ENCODE measurements at regions of chr2 and their contacts with region 1.

Region 1: DNA sequence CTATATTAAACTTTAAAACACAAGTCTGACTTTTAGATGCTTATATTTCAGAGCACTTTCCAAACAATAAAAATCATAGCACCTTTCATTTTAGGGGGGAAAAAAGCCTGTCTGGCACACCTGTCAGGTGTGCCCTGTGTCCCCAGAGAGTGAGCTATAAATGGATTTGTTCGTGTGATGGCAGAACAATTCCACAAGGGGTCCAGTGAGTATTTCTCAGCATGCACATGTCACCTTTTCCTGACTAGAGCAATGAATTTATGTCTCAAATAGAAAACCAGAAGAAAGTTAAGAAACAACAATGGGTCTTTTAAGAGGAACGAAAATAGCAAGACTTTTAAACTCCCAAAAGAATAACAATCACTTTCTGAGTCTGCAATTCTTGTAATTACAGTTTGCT is 55.9 kb downstream of the ACVR1C start:
- DNase-seq: peak; percentile 6 to 36
- ATAC-seq: peak in 1 of 2 experiments; percentile 76; a peak in 3 of 6 replicates
- H3K4me3 ChIP-seq: no peak overlapping the region
- H3K27ac ChIP-seq: no peak overlapping the region
- H3K4me1 ChIP-seq: no peaks in the 10 kb centered on the region
- CTCF ChIP-seq: 0 out of 3 replicates have a peak, but pooled peaks have one; percentile 8
- EP300 ChIP-seq: no peak
- POLR2A ChIP-seq: no peak
- RAD21 ChIP-seq: no peak

Region 2: GRCh38 chr2:157592948-157593347 is 20.2 kb after region 1 on chr2:
- CTCF ChIA-PET with region 1: no interaction called
- POLR2A ChIA-PET with region 1: no interaction called
- DNase-seq: peak in 1 of 2 experiments; percentile 10
- ATAC-seq: no peak
- H3K4me3 ChIP-seq: no peak overlapping the region
- H3K27ac ChIP-seq: no peak overlapping the region
- H3K4me1 ChIP-seq: no peaks in the 10 kb centered on the region
- CTCF ChIP-seq: 0 out of 3 replicates have a peak, but pooled peaks have one; percentile 20
- EP300 ChIP-seq: no peak
- POLR2A ChIP-seq: no peak
- RAD21 ChIP-seq: peak; percentile 16 to 18; a peak in 2 of 5 replicates

Region 3: GRCh38 chr2:157644776-157645175 is 72.1 kb after region 1 on chr2:
- CTCF ChIA-PET with region 1: no interaction called
- POLR2A ChIA-PET with region 1: no interaction called
- DNase-seq: no peak
- ATAC-seq: no peak
- H3K4me3 ChIP-seq: no peak overlapping the region
- H3K27ac ChIP-seq: no peak overlapping the region
- H3K4me1 ChIP-seq: no peaks in the 10 kb centered on the region
- CTCF ChIP-seq: no peak
- EP300 ChIP-seq: no peak
- POLR2A ChIP-seq: no peak
- RAD21 ChIP-seq: no peak

Region 4: GRCh38 chr2:157777427-157777826 is 204.7 kb after region 1 on chr2:
- CTCF ChIA-PET with region 1: no interaction called
- POLR2A ChIA-PET with region 1: no interaction called
- DNase-seq: peak; percentile 24 to 56
- ATAC-seq: peak in 1 of 2 experiments; percentile 60; a peak in 3 of 6 replicates
- H3K4me3 ChIP-seq: no peak overlapping the region
- H3K27ac ChIP-seq: no peak overlapping the region
- H3K4me1 ChIP-seq: peaks cover 3% of the 10 kb centered on the region; the same call in 1 of the 3 replicates
- CTCF ChIP-seq: peak; percentile 85
- EP300 ChIP-seq: no peak
- POLR2A ChIP-seq: no peak
- RAD21 ChIP-seq: peak; percentile 88 to 91

Region 5: GRCh38 chr2:157857881-157858280 is 285.2 kb after region 1 on chr2:
- CTCF ChIA-PET with region 1: no interaction called
- POLR2A ChIA-PET with region 1: interaction called, 12 read pairs
- DNase-seq: peak in 1 of 2 experiments; percentile 68
- ATAC-seq: peak; percentile 88 to 89
- H3K4me3 ChIP-seq: no peak overlapping the region
- H3K27ac ChIP-seq: peak overlapping the region; percentile 55 to 75
- H3K4me1 ChIP-seq: peaks cover 43% of the 10 kb centered on the region
- CTCF ChIP-seq: no peak
- EP300 ChIP-seq: no peak
- POLR2A ChIP-seq: no peak
- RAD21 ChIP-seq: no peak

Measured in A549 (cell line).